CD4-positive, alpha-beta T cell (primary cell): ENCODE measurements at regions of chr20 and their contacts with region 1.

Region 1: GRCh38 chr20:58236612-58237330 is 8.3 kb upstream of the ANKRD60 start:
- DNase-seq: peak; percentile 66 to 90 (median 82)
- ATAC-seq: peak; percentile 87
- H3K4me3 ChIP-seq: peak overlapping the region; percentile 71
- H3K4me3 Mint-ChIP-seq: peak overlapping the region; percentile 88
- H3K27ac ChIP-seq: peak overlapping the region; percentile 58 to 66
- H3K27ac Mint-ChIP-seq: peak overlapping the region; percentile 77
- H3K4me1 ChIP-seq: peaks cover 9% of the 10 kb centered on the region
- H3K4me1 Mint-ChIP-seq: peaks cover 13% of the 10 kb centered on the region
- H3K27me3 ChIP-seq: no peaks in the 10 kb centered on the region
- H3K27me3 Mint-ChIP-seq: no peaks in the 10 kb centered on the region
- CTCF ChIP-seq: peak; percentile 99

Region 2: DNA sequence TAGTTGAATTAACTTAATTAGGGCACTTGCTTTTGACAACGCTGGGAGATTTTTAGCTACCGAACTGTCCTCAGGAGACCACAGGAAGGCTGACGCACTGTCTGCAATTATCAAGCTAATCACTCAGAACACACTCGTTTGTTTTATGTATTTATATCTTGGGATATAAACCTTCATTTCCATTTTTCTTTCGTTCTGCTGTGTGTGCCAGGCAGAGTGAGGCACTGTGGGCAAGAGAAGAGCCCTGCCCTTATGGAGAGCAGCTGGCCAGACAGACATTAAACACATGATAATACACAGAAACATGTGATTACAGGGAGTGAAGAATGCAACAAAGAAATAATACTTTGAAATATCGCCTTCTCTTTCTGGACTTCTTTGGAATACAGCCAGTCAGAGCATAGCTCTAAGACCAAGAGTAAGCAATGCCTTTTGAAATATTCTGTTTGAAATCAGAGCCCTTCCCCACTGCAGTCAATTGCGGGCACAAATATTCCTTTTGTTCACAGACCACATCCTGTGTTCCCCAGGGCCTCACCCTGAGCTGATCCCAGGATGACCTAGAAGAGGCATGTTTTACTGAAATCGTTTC is 105.1 kb before region 1 on chr20:
- CTCF ChIA-PET with region 1: no interaction called
- POLR2A ChIA-PET with region 1: no interaction called
- intact Hi-C with region 1: no loop called
- DNase-seq: no peak
- ATAC-seq: no peak
- H3K4me3 ChIP-seq: no peak overlapping the region
- H3K4me3 Mint-ChIP-seq: no peak overlapping the region
- H3K27ac ChIP-seq: no peak overlapping the region
- H3K27ac Mint-ChIP-seq: no peak overlapping the region
- H3K4me1 ChIP-seq: no peaks in the 10 kb centered on the region
- H3K4me1 Mint-ChIP-seq: peaks cover 11% of the 10 kb centered on the region
- H3K27me3 ChIP-seq: peaks cover 33 to 43% of the 10 kb centered on the region in 2 experiments
- H3K27me3 Mint-ChIP-seq: peaks cover 92% of the 10 kb centered on the region
- CTCF ChIP-seq: no peak

Region 3: GRCh38 chr20:58303547-58303946 is 66.8 kb after region 1 on chr20:
- CTCF ChIA-PET with region 1: interaction called, 17 read pairs
- POLR2A ChIA-PET with region 1: interaction called, 4 read pairs
- intact Hi-C with region 1: loop called (anchors 1 to 2 kb)
- DNase-seq: no peak
- ATAC-seq: no peak
- H3K4me3 ChIP-seq: no peak overlapping the region
- H3K4me3 Mint-ChIP-seq: no peak overlapping the region
- H3K27ac ChIP-seq: no peak overlapping the region
- H3K27ac Mint-ChIP-seq: peak overlapping the region; percentile 98
- H3K4me1 ChIP-seq: peaks cover 27% of the 10 kb centered on the region
- H3K4me1 Mint-ChIP-seq: peaks cover 51% of the 10 kb centered on the region
- H3K27me3 ChIP-seq: no peaks in the 10 kb centered on the region
- H3K27me3 Mint-ChIP-seq: no peaks in the 10 kb centered on the region
- CTCF ChIP-seq: no peak

Region 4: GRCh38 chr20:58447511-58448391 is 211.0 kb after region 1 on chr20:
- CTCF ChIA-PET with region 1: no interaction called
- POLR2A ChIA-PET with region 1: no interaction called
- intact Hi-C with region 1: loop called (anchors 1 kb)
- DNase-seq: peak; percentile 33 to 72 (median 49)
- ATAC-seq: peak; percentile 90
- H3K4me3 ChIP-seq: no peak overlapping the region
- H3K4me3 Mint-ChIP-seq: no peak overlapping the region
- H3K27ac ChIP-seq: no peak overlapping the region
- H3K27ac Mint-ChIP-seq: no peak overlapping the region
- H3K4me1 ChIP-seq: no peaks in the 10 kb centered on the region
- H3K4me1 Mint-ChIP-seq: no peaks in the 10 kb centered on the region
- H3K27me3 ChIP-seq: no peaks in the 10 kb centered on the region
- H3K27me3 Mint-ChIP-seq: no peaks in the 10 kb centered on the region
- CTCF ChIP-seq: peak; percentile 67

Region 5: DNA sequence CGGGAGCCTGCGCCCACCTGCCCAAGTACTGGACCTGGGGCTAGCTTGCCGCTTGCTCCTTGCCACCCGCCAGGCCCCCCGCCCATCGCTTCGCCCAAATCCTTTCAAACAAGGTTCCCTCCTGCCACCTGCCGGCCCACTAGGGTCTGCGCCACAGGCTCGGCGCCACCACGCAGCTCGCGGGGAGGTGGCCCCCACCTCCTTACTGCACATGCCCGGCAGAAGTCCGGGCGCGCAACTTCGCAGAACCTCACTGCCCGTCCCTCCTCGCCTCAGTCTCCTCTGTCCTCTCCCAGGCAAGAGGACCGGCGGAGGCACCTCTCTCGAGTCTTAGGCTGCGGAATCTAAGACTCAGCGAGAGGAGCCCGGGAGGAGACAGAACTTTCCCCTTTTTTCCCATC is 602.7 kb after region 1 on chr20:
- CTCF ChIA-PET with region 1: no interaction called
- POLR2A ChIA-PET with region 1: no interaction called
- intact Hi-C with region 1: loop called in 1 of 2 experiments (anchors 5 kb)
- DNase-seq: peak in 12 of 14 experiments; percentile 19 to 68 (median 42)
- ATAC-seq: peak; percentile 64
- H3K4me3 ChIP-seq: peak overlapping the region; percentile 19
- H3K4me3 Mint-ChIP-seq: no peak overlapping the region
- H3K27ac ChIP-seq: no peak overlapping the region
- H3K27ac Mint-ChIP-seq: no peak overlapping the region
- H3K4me1 ChIP-seq: peaks cover 11% of the 10 kb centered on the region
- H3K4me1 Mint-ChIP-seq: peaks cover 5% of the 10 kb centered on the region
- H3K27me3 ChIP-seq: peaks cover 19 to 26% of the 10 kb centered on the region in 2 experiments
- H3K27me3 Mint-ChIP-seq: peaks cover 72% of the 10 kb centered on the region
- CTCF ChIP-seq: peak; percentile 20

Region 6: DNA sequence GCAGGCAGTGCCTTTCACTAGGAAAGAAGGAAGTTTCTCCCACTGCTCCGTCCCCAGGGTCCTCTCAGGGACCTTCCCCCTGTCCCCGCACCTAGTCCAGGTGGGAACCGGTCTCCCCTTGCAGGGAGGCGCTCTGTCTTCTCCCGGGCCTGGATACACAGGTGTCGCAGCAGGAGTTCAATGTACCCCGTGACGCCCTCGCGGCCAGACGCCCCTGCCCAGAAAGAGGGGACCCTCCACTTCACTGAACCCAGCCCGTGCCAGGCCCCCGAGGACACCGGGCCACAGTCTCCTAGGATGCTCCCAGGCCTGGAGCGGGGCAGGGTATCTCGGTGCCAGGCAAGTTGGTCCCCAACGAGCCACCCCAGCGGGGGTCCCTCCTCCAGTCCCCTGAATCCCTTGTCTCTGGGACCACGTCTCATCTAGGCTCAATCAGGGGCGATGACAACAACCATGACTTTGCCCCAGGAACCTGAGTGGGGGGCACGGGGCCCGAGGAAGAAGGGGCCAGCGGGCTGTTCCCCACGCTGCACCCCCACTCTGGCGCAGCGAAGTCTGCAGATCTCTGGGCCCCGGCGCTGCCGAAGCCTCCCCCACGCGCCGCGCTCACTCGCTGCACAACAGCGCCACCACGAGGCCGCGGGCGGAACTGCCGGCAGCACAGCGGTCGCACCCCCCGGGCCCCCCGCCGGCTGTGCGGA is 1166.6 kb after region 1 on chr20:
- CTCF ChIA-PET with region 1: no interaction called
- POLR2A ChIA-PET with region 1: no interaction called
- intact Hi-C with region 1: loop called in 1 of 2 experiments (anchors 5 kb)
- DNase-seq: peak; percentile 52 to 83 (median 72)
- ATAC-seq: peak; percentile 71
- H3K4me3 ChIP-seq: peak overlapping the region; percentile 25
- H3K4me3 Mint-ChIP-seq: peak overlapping the region; percentile 76
- H3K27ac ChIP-seq: no peak overlapping the region
- H3K27ac Mint-ChIP-seq: no peak overlapping the region
- H3K4me1 ChIP-seq: peaks cover 21% of the 10 kb centered on the region
- H3K4me1 Mint-ChIP-seq: no peaks in the 10 kb centered on the region
- H3K27me3 ChIP-seq: peaks cover 27 to 41% of the 10 kb centered on the region in 2 experiments
- H3K27me3 Mint-ChIP-seq: no peaks in the 10 kb centered on the region
- CTCF ChIP-seq: peak; percentile 99